Dendritic cell treated with granulocyte-macrophage colony-stimulating factor and Interleukin-4, amounts not matched to agents 40 ng/mL and 50 ng/mL, for 4 days (primary cell): ENCODE measurements at regions of chr6 and their contacts with region 1.

Region 1: DNA sequence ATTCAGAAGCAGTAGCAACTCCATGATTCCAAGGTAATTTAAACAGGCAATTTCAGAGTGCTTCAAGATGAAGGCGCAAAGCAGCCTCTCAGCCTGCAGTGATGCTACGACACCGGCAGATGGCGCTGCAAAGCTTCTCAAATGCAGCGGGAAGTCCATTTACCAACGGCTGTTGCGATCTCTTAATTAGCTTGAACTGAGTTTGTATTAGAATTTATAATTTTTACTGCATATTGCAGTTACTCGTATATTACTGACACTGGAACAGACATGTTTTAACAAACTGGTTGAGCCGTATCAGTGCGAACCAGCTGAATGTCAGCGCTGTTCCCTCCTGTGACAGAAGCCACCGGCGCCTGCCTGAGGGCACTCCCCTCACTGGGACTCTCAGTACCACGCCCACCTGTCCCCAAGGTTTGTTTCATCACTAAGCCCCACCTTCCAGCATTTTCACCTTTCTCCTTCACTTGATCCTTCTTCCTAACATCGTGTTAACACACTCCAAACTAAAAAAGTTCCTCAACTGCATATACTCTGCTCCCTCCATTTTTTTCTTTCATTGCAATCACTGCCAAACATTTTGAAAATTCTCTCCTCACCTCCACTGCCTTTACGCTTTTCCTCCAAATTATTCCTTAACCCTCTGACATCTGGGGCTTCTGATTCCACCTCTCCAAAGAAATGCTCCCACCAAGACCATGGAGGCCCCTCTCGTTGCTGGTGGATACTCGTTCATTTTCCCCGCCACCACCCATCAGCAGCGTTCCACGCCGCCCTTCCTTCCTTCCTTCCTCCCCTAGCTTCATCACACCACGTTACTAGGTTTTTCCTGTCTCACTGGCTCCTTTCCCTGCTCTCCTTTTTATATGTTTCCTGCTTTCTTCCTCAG is 14.5 kb downstream of the GNL1 start:
- H3K4me3 Mint-ChIP-seq: peak overlapping the region; percentile 67
- H3K27ac Mint-ChIP-seq: no peak overlapping the region
- H3K4me1 Mint-ChIP-seq: peaks cover 23% of the 10 kb centered on the region
- H3K27me3 Mint-ChIP-seq: peaks cover 20% of the 10 kb centered on the region

Region 2: GRCh38 chr6:30600451-30600961 is 58.7 kb after region 1 on chr6:
- intact Hi-C with region 1: loop called (anchors 5 kb)
- H3K4me3 Mint-ChIP-seq: no peak overlapping the region
- H3K27ac Mint-ChIP-seq: no peak overlapping the region
- H3K4me1 Mint-ChIP-seq: peaks cover 21% of the 10 kb centered on the region
- H3K27me3 Mint-ChIP-seq: no peaks in the 10 kb centered on the region